CD8-positive, alpha-beta T cell (primary cell): ENCODE measurements at regions of chr3 and their contacts with region 1.

Region 1: GRCh38 chr3:141875374-141875892 is 1.0 kb upstream of the ATP1B3 start:
- DNase-seq: peak; percentile 67 to 92 (median 84)
- ATAC-seq: peak; percentile 67
- H3K4me3 ChIP-seq: peak overlapping the region; percentile 71 to 88
- H3K4me3 Mint-ChIP-seq: peak overlapping the region; percentile 88
- H3K27ac ChIP-seq: peak overlapping the region; percentile 76 to 99
- H3K27ac Mint-ChIP-seq: peak overlapping the region; percentile 90
- H3K4me1 ChIP-seq: peaks cover 17% of the 10 kb centered on the region
- H3K4me1 Mint-ChIP-seq: peaks cover 29% of the 10 kb centered on the region
- H3K27me3 ChIP-seq: no peaks in the 10 kb centered on the region
- H3K27me3 Mint-ChIP-seq: no peaks in the 10 kb centered on the region
- CTCF ChIP-seq: peak; percentile 82

Region 2: GRCh38 chr3:141321109-141321497 is 554.3 kb before region 1 on chr3:
- CTCF ChIA-PET with region 1: no interaction called
- POLR2A ChIA-PET with region 1: no interaction called
- intact Hi-C with region 1: loop called in 1 of 2 experiments (anchors 5 kb)
- DNase-seq: peak in 1 of 9 experiments; percentile 50
- ATAC-seq: peak; percentile 29
- H3K4me3 ChIP-seq: no peak overlapping the region
- H3K4me3 Mint-ChIP-seq: peak overlapping the region; percentile 54
- H3K27ac ChIP-seq: peak overlapping the region in 1 of 2 experiments; percentile 34
- H3K27ac Mint-ChIP-seq: peak overlapping the region; percentile 89
- H3K4me1 ChIP-seq: peaks cover 24% of the 10 kb centered on the region
- H3K4me1 Mint-ChIP-seq: peaks cover 33% of the 10 kb centered on the region
- H3K27me3 ChIP-seq: no peaks in the 10 kb centered on the region
- H3K27me3 Mint-ChIP-seq: no peaks in the 10 kb centered on the region
- CTCF ChIP-seq: no peak

Region 3: DNA sequence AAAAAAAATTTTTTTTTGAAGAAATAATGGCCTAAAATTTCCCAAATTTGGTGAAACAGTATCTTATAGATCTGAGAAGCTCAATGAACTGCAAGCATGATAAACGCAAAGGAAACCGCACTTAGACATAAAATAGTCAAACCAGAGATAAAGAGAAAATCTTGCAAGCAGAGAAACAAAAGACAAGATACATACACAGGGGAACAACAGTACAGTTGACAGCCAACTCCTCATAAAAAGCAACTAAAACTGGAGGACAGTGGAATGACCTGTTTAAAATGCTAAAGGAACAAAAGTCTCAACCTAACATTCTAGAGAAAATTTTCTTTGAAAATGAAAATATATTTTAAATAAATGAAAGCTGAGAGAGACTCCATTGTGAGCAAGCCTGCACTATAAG is 281.1 kb before region 1 on chr3:
- CTCF ChIA-PET with region 1: no interaction called
- POLR2A ChIA-PET with region 1: no interaction called
- intact Hi-C with region 1: no loop called
- DNase-seq: no peak
- ATAC-seq: no peak
- H3K4me3 ChIP-seq: no peak overlapping the region
- H3K4me3 Mint-ChIP-seq: no peak overlapping the region
- H3K27ac ChIP-seq: no peak overlapping the region
- H3K27ac Mint-ChIP-seq: no peak overlapping the region
- H3K4me1 ChIP-seq: no peaks in the 10 kb centered on the region
- H3K4me1 Mint-ChIP-seq: no peaks in the 10 kb centered on the region
- H3K27me3 ChIP-seq: no peaks in the 10 kb centered on the region
- H3K27me3 Mint-ChIP-seq: no peaks in the 10 kb centered on the region
- CTCF ChIP-seq: no peak

Region 4: DNA sequence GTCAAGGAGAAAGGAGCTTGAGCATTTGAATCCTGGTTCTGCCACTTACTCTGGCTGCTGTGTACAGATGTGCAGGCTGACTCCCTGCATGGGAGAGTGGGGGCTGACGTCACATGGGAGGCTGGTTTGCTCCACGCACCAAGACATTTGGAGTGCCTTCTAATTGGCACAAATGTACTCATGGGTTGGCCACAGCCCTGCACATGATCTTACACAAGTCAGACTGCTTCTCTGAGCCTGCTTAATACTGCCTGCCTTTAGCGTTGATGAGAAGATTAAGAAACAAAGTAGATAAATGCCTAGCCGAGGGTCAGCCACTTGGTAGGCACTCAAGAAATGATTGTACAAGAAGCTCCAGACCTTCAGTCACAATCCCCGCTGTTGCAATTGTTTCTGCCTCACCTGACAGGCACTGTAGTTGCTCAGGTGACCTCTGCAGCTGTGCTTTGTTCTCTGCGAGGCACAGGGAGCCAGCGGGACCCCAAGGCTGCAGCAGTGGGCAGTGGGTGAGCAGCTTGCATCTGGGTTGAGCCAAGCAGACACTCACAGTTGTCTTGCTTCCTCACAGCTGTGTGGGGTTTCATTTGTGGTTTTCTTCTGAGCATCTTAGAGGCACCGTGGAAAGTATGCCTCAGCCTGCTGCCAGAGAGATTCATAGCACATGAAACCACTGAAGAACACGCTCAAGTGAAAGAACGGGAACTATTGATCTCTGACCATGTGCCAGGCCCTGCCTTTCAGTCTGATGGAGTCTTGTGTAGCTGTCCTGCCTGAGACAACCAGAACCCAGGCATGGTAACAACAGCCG is 79.1 kb before region 1 on chr3:
- CTCF ChIA-PET with region 1: interaction called, 23 read pairs
- POLR2A ChIA-PET with region 1: interaction called, 33 read pairs
- intact Hi-C with region 1: loop called (anchors 1 kb)
- DNase-seq: peak; percentile 19 to 84 (median 68)
- ATAC-seq: peak; percentile 72
- H3K4me3 ChIP-seq: peak overlapping the region; percentile 42 to 48
- H3K4me3 Mint-ChIP-seq: peak overlapping the region; percentile 91
- H3K27ac ChIP-seq: peak overlapping the region; percentile 64 to 86
- H3K27ac Mint-ChIP-seq: peak overlapping the region; percentile 98
- H3K4me1 ChIP-seq: peaks cover 51% of the 10 kb centered on the region
- H3K4me1 Mint-ChIP-seq: peaks cover 58% of the 10 kb centered on the region
- H3K27me3 ChIP-seq: no peaks in the 10 kb centered on the region
- H3K27me3 Mint-ChIP-seq: no peaks in the 10 kb centered on the region
- CTCF ChIP-seq: no peak

Region 5: DNA sequence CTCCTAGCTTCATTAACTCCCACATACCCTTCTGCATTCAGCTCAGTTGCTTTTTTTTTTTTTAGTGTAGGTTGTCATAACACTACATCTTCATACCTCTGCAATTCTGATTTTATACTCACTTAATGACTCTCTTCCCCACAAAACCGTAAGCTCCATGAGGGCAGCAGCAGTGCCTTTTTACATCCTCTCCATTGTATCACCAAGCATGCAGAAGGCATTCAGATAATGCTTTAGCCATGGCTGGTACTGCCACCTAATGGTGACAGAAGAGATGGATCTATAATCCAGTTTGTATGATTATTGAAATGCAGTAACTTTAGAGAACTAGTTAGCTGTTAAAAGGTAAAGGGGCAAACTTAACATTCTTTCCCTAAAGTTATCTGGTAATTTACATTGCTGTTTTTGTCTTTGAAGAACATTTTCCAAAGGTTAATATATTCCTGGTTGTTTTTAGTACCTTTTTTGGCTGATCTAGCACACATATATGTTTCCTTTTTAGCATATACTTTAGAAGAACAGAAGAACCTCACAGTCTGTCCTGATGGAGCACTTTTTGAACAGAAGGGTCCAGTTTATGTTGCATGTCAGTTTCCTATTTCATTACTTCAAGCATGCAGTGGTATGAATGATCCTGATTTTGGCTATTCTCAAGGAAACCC is 37.8 kb after region 1 on chr3:
- CTCF ChIA-PET with region 1: interaction called, 5 read pairs
- POLR2A ChIA-PET with region 1: interaction called, 3 read pairs
- intact Hi-C with region 1: loop called (anchors 2 to 5 kb)
- DNase-seq: peak in 8 of 9 experiments; percentile 21 to 78 (median 47)
- ATAC-seq: peak; percentile 80
- H3K4me3 ChIP-seq: no peak overlapping the region
- H3K4me3 Mint-ChIP-seq: no peak overlapping the region
- H3K27ac ChIP-seq: peak overlapping the region in 1 of 2 experiments; percentile 23
- H3K27ac Mint-ChIP-seq: no peak overlapping the region
- H3K4me1 ChIP-seq: no peaks in the 10 kb centered on the region
- H3K4me1 Mint-ChIP-seq: no peaks in the 10 kb centered on the region
- H3K27me3 ChIP-seq: no peaks in the 10 kb centered on the region
- H3K27me3 Mint-ChIP-seq: no peaks in the 10 kb centered on the region
- CTCF ChIP-seq: peak; percentile 77

Region 6: DNA sequence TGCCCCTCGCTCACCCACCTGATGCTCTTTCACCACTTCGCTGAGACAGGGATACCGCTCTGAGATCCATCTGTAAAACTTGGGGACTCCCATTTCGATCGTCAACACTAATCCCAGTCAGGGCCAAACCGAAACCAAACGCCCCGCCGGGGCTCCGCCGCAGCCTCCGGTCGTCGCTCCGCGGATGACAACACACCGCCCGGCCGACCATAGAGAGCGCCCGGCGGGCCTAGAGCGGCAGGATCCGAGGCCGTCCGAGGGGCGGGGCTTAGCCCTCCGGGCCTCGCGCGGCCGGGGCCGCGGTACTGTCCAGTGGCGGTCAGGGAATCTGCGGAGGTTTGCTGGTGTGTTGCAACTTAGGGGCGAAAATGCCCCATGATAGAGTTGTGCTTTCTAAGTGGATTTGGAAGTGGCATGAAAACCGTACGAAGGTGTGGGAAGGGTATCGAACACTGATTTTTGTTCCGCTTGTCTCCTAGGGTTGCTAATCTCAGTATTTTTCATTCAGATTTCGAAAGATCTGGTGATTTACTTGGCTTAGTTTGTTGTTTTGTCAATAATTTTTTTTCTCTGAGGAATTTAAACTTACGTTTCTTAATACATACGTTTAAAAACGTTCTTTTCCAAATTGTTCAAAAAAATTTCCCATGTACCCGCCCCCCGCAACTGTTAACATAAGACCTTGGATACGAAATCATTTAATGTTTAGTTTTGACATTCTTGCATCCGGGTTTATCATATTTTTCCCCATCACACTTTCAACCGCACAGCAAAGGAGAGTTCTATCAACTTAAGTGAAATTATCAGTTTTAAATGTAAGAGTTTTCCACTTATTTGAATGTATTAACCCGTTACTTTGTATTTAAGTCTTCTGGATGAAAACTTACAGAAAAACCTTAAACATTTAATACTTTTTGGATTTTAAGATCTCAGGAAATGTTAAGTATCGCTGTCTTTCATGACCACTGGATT is 572.7 kb after region 1 on chr3 and contains the start of gene XRN1:
- CTCF ChIA-PET with region 1: no interaction called
- POLR2A ChIA-PET with region 1: interaction called, 4 read pairs
- intact Hi-C with region 1: loop called (anchors 2 to 5 kb)
- DNase-seq: peak; percentile 92 to 96 (median 95)
- ATAC-seq: peak; percentile 95
- H3K4me3 ChIP-seq: peak within 1 kb of the TSS; percentile 86 to 93
- H3K4me3 Mint-ChIP-seq: peak within 1 kb of the TSS; percentile 99
- H3K27ac ChIP-seq: peak within 1 kb of the TSS; percentile 97 to 99
- H3K27ac Mint-ChIP-seq: peak within 1 kb of the TSS; percentile 100
- H3K4me1 ChIP-seq: peaks cover 40% of the 10 kb centered on the region
- H3K4me1 Mint-ChIP-seq: peaks cover 43% of the 10 kb centered on the region
- H3K27me3 ChIP-seq: no peaks in the 10 kb centered on the region
- H3K27me3 Mint-ChIP-seq: no peaks in the 10 kb centered on the region
- CTCF ChIP-seq: no peak
- total RNA-seq, gene XRN1: 91.0 to 105 TPM

Region 7: GRCh38 chr3:142501004-142501926 is 625.8 kb after region 1 on chr3:
- CTCF ChIA-PET with region 1: no interaction called
- POLR2A ChIA-PET with region 1: no interaction called
- intact Hi-C with region 1: no loop called
- DNase-seq: no peak
- ATAC-seq: no peak
- H3K4me3 ChIP-seq: no peak overlapping the region
- H3K4me3 Mint-ChIP-seq: no peak overlapping the region
- H3K27ac ChIP-seq: no peak overlapping the region
- H3K27ac Mint-ChIP-seq: no peak overlapping the region
- H3K4me1 ChIP-seq: no peaks in the 10 kb centered on the region
- H3K4me1 Mint-ChIP-seq: no peaks in the 10 kb centered on the region
- H3K27me3 ChIP-seq: no peaks in the 10 kb centered on the region
- H3K27me3 Mint-ChIP-seq: no peaks in the 10 kb centered on the region
- CTCF ChIP-seq: no peak